ENCODE measurements at regions of chr1 and their contacts with region 1.

Region 1: DNA sequence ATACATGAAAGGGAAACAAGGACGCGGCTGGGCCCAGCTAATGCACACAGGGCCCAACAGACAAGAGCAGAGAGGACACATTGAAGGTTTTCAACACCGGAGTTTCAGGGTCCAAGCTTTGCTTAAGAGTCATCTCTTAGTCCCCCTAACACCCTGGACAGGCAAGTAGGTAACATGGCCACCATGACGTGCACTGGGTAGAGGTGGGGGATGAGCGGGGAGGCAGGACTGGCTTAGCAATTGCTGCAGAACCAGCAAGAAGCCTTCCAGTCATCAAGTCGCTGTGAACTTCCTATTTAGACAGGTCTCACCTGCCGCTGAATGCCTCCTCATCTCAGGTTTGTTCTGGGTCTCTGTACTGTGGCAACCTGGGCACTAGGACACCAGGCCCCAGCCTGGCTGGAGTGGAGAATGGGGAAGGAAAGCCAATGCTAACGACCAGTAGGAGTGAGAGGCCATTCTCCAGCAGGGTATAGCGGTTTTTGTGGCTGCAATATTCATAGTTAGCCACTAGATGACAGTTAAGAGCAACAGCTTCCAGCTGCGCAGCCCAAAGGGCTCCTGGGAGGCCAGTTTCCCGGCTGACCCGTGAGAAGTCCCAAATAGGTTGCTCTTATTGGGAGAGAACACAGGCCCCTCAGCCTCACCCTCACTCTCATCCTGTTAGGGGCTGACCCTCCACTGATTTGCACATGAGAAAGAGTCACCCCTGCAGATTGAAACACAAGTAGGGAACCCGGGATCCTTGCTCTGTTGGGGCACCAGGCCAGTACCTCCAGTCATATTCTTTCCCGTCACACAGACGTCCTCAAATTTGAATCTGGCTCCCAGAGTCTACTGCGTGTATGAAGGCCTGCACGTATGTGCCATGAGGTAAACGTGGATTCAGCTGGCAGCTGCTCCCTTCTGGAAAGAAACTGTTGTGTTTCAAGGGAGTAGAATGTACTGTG is 6.0 kb upstream of the PIGC start:
- DNase-seq: peak; percentile 29
- H3K4me3 Mint-ChIP-seq: no peak overlapping the region
- H3K27ac Mint-ChIP-seq: no peak overlapping the region
- H3K4me1 Mint-ChIP-seq: peaks cover 32% of the 10 kb centered on the region
- H3K27me3 Mint-ChIP-seq: peaks cover 2% of the 10 kb centered on the region

Region 2: DNA sequence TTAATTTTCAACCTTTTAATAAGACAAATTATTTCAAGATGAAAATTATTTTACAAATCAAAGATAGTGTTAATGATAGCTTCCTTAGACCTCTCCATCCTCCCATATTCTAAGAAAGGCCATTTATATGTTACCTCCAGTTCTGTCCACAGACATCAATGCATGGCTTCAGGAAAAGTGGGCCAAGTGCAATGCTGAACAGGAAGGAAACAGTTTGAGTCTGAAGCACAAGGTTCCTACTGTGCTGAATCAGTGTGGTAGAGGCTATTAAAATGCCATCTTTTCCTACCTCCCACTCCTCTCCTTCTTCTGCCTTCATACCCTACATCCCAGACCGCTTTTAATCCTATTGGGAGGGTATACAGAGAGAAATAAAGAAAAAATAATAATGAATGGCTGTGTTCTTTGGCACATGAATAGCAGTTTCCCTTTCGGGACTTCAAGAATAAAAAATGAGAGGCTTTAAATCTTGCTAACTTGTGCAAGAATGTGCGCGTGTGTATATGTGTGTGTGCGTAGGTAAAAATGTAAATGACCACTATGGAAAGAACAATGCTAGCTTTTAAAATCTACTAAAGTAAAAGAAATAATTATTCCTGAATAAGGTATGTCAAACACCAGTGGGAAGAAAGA is 92.0 kb before region 1 on chr1:
- intact Hi-C with region 1: loop called (anchors 5 kb)
- DNase-seq: no peak
- H3K4me3 Mint-ChIP-seq: no peak overlapping the region
- H3K27ac Mint-ChIP-seq: peak overlapping the region; percentile 82
- H3K4me1 Mint-ChIP-seq: peaks cover 52% of the 10 kb centered on the region
- H3K27me3 Mint-ChIP-seq: no peaks in the 10 kb centered on the region

Region 3: GRCh38 chr1:172532700-172533509 is 83.0 kb after region 1 on chr1 and contains the start of gene SUCO:
- intact Hi-C with region 1: loop called (anchors 1 kb)
- DNase-seq: peak; percentile 100
- H3K4me3 Mint-ChIP-seq: peak within 1 kb of the TSS; percentile 95
- H3K27ac Mint-ChIP-seq: peak within 1 kb of the TSS; percentile 99
- H3K4me1 Mint-ChIP-seq: peaks cover 38% of the 10 kb centered on the region
- H3K27me3 Mint-ChIP-seq: peaks cover 9% of the 10 kb centered on the region
- total RNA-seq, gene SUCO: 28.2 and 33.3 TPM in 2 replicates

Region 4: GRCh38 chr1:172588296-172589291 is 138.7 kb after region 1 on chr1:
- intact Hi-C with region 1: loop called (anchors 2 kb)
- DNase-seq: no peak
- H3K4me3 Mint-ChIP-seq: no peak overlapping the region
- H3K27ac Mint-ChIP-seq: peak overlapping the region; percentile 72
- H3K4me1 Mint-ChIP-seq: peaks cover 28% of the 10 kb centered on the region
- H3K27me3 Mint-ChIP-seq: no peaks in the 10 kb centered on the region

Region 5: DNA sequence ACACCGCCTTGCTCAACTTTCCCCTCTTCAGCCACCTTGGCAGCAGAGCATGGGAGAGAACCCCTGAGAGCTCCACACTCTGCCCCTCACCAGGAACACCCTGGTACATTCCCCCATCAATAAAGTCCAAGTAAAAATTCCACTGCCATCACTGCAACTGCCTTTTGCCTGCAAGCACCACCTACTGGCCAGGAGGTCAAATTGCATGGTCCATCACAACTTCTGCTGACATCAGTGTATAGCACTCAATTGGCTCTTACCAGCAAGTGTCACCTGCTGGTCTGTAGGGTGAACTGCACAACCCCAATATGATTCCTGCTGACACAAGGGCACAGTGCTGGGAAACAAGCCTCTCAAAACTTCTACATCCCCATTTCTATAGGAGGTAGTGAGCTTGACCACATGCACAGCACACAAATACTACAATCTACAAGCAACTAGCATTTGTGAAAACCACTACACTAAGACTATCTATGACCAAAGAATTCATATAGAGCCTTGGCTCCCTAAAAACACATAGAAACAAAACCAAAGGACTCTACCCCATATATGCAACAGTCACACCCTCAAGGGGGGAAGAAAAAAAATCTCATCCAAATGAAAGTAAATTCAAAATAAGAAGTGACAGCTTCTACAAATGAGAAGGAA is 278.2 kb after region 1 on chr1:
- intact Hi-C with region 1: loop called (anchors 2 kb)
- DNase-seq: no peak
- H3K4me3 Mint-ChIP-seq: no peak overlapping the region
- H3K27ac Mint-ChIP-seq: no peak overlapping the region
- H3K4me1 Mint-ChIP-seq: peaks cover 23% of the 10 kb centered on the region
- H3K27me3 Mint-ChIP-seq: peaks cover 16% of the 10 kb centered on the region